A549 (cell line): ENCODE measurements at regions of chr10 and their contacts with region 1.

Region 1: DNA sequence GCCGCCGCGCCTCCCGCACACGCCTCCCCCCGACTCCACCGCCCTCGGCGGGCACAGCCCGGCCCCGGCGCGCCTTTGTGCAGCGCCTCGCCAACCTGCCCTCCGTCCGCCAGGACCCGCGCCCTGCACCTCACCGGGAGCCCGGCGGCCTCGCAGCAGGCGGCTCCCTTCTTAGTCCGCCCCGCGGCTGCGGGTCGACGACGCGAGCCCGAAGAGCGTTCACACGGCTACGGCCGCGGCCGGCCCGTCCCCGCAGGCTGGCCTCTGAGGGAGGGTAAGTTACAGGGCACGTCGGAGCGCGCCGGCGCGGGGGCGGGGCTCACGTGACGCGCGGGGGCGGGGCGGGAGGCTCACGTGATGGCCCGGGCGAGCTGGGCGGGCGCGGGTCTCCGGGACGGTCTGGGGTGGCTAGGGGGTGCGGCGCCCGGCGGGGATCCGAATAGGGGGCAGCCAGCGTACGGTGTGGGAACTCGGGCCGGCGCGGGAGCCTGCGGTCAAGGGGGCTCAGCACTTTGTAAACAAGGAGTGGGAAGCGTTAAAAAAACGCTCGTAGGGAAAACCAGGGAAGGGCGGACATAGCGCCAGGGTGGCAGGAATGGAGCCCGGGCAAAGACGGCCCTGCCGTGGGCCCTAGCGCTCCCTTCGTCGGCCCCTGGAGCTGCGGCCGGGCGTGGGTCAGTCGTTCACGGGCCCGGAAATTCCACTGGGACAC is at the start of gene ARHGAP12:
- DNase-seq: peak; percentile 38 to 89
- ATAC-seq: peak; percentile 76 to 86
- H3K4me3 ChIP-seq: peak within 1 kb of the TSS; percentile 91
- H3K27ac ChIP-seq: peak within 1 kb of the TSS; percentile 97 to 99
- H3K4me1 ChIP-seq: peaks cover 55% of the 10 kb centered on the region
- CTCF ChIP-seq: no peak
- EP300 ChIP-seq: peak in 1 of 2 experiments; percentile 8; a peak in 1 of 5 replicates
- POLR2A ChIP-seq: peak; percentile 77
- RAD21 ChIP-seq: no peak; a peak in 2 of 5 replicates
- polyA plus RNA-seq, gene ARHGAP12: 39.0 and 49.3 TPM in 2 replicates

Region 2: GRCh38 chr10:31864834-31865518 is 63.7 kb before region 1 on chr10:
- CTCF ChIA-PET with region 1: interaction called, 33 read pairs
- POLR2A ChIA-PET with region 1: interaction called, 30 read pairs
- DNase-seq: peak; percentile 23 to 44
- ATAC-seq: peak in 1 of 2 experiments; percentile 59; a peak in 3 of 6 replicates
- H3K4me3 ChIP-seq: peak overlapping the region; percentile 33
- H3K27ac ChIP-seq: peak overlapping the region; percentile 77 to 90
- H3K4me1 ChIP-seq: peaks cover 71% of the 10 kb centered on the region
- CTCF ChIP-seq: no peak
- EP300 ChIP-seq: no peak
- POLR2A ChIP-seq: no peak
- RAD21 ChIP-seq: no peak

Region 3: DNA sequence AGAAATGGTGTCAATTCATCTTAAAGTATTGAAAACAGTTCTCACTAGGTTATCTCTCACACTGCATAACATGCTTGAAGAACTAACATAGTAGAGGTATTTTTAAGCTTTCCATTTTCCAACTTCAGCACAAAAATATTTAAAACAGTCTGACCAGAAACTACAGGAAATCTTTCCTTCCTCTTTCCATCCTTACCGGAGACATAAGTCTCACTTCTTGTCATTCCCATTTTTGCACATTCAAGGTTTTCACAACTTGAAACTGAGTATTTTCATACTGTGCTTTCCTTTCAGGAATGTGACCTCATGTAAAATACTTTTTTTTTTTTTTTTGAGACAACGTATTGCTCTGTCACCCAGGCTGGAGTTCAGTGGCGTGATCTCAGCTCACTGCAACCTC is 45.3 kb before region 1 on chr10:
- CTCF ChIA-PET with region 1: interaction called, 5 read pairs
- POLR2A ChIA-PET with region 1: interaction called, 19 read pairs
- DNase-seq: no peak
- ATAC-seq: 0 out of 6 replicates have a peak, but pooled peaks of 1 of the 2 experiments have one; percentile 6
- H3K4me3 ChIP-seq: no peak overlapping the region
- H3K27ac ChIP-seq: peak overlapping the region; percentile 81 to 89
- H3K4me1 ChIP-seq: peaks cover 92% of the 10 kb centered on the region
- CTCF ChIP-seq: no peak
- EP300 ChIP-seq: no peak
- POLR2A ChIP-seq: no peak
- RAD21 ChIP-seq: no peak

Region 4: DNA sequence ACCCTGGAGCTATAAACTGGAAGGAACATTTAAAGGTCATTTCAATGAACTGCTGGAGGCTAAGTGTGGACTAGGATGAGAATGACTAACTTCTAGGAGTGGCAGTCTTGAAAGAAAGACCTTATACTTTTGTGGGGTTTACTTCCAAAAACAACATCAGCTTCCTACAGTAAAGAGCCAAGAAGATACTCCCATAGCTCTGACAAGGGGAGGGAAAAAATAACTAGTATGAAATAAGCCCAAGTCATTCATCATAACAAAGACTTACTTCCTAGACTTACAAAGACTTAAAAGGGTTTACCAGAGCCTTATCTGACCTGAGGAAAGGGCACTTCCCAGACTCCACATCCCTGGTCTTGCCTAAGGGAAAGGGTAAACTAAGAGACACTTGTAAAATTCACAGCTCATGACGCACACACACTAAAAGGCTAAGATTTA is 31.7 kb before region 1 on chr10:
- CTCF ChIA-PET with region 1: interaction called, 5 read pairs
- POLR2A ChIA-PET with region 1: interaction called, 12 read pairs
- DNase-seq: peak; percentile 21 to 75
- ATAC-seq: peak; percentile 81 to 94
- H3K4me3 ChIP-seq: no peak overlapping the region
- H3K27ac ChIP-seq: peak overlapping the region; percentile 64 to 80; a peak in 5 of 6 replicates
- H3K4me1 ChIP-seq: peaks cover 30% of the 10 kb centered on the region
- CTCF ChIP-seq: no peak
- EP300 ChIP-seq: peak in 1 of 2 experiments; percentile 50; a peak in 1 of 5 replicates
- POLR2A ChIP-seq: no peak
- RAD21 ChIP-seq: no peak

Region 5: GRCh38 chr10:31940839-31941653 is 12.3 kb after region 1 on chr10:
- CTCF ChIA-PET with region 1: interaction called, 4 read pairs
- POLR2A ChIA-PET with region 1: interaction called, 11 read pairs
- DNase-seq: peak; percentile 70 to 98
- ATAC-seq: peak; percentile 94 to 99
- H3K4me3 ChIP-seq: no peak overlapping the region
- H3K27ac ChIP-seq: peak overlapping the region; percentile 83 to 92
- H3K4me1 ChIP-seq: peaks cover 85% of the 10 kb centered on the region
- CTCF ChIP-seq: no peak
- EP300 ChIP-seq: peak; percentile 92 to 96; a peak in 3 of 5 replicates
- POLR2A ChIP-seq: no peak
- RAD21 ChIP-seq: peak; percentile 20 to 45; a peak in 2 of 5 replicates

Region 6: GRCh38 chr10:31947144-31947926 is 18.6 kb after region 1 on chr10:
- CTCF ChIA-PET with region 1: interaction called, 10 read pairs
- POLR2A ChIA-PET with region 1: interaction called, 7 read pairs
- DNase-seq: peak; percentile 63 to 87
- ATAC-seq: peak; percentile 88 to 91
- H3K4me3 ChIP-seq: no peak overlapping the region
- H3K27ac ChIP-seq: peak overlapping the region; percentile 72 to 82
- H3K4me1 ChIP-seq: peaks cover 67% of the 10 kb centered on the region
- CTCF ChIP-seq: peak; percentile 81
- EP300 ChIP-seq: peak in 1 of 2 experiments; percentile 45; a peak in 1 of 5 replicates
- POLR2A ChIP-seq: no peak
- RAD21 ChIP-seq: peak; percentile 93 to 97

Region 7: GRCh38 chr10:32190890-32191491 is 262.3 kb after region 1 on chr10:
- CTCF ChIA-PET with region 1: no interaction called
- POLR2A ChIA-PET with region 1: no interaction called
- DNase-seq: peak in 1 of 2 experiments; percentile 42
- ATAC-seq: peak; percentile 50 to 69; a peak in 4 of 6 replicates
- H3K4me3 ChIP-seq: no peak overlapping the region
- H3K27ac ChIP-seq: no peak overlapping the region
- H3K4me1 ChIP-seq: peaks cover 15% of the 10 kb centered on the region; the same call in 2 of the 3 replicates
- CTCF ChIP-seq: peak; percentile 80
- EP300 ChIP-seq: no peak
- POLR2A ChIP-seq: no peak
- RAD21 ChIP-seq: peak; percentile 68 to 74